ENCODE measurements at regions of chrX and their contacts with region 1.

Region 1: DNA sequence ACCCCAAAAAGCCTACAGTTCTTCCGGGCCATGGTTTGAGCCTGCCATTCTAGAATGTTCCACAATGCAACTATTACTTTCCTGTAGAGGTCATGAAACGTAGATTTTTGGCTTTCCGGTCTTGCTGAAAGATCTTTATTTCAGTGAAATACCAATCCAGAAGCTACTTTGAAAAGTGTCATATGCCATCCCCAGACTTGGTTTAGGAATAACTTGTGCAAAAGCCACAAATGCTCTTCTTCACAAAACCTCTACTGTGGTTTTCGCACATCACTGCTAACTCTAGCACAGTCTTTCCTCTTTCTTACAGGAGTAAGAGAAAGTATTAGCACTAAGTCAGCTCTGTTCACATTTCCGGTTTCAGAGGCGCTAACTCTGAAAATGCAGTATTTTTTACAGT is 12.7 kb upstream of the CD40LG start:
- DNase-seq: peak; percentile 51
- ATAC-seq: peak; percentile 80
- H3K4me3 ChIP-seq: no peak overlapping the region
- H3K27ac ChIP-seq: no peak overlapping the region
- H3K4me1 ChIP-seq: peaks cover 8% of the 10 kb centered on the region
- H3K27me3 ChIP-seq: no peaks in the 10 kb centered on the region
- CTCF ChIP-seq: no peak
- EP300 ChIP-seq: no peak
- POLR2A ChIP-seq: no peak
- RAD21 ChIP-seq: no peak

Region 2: DNA sequence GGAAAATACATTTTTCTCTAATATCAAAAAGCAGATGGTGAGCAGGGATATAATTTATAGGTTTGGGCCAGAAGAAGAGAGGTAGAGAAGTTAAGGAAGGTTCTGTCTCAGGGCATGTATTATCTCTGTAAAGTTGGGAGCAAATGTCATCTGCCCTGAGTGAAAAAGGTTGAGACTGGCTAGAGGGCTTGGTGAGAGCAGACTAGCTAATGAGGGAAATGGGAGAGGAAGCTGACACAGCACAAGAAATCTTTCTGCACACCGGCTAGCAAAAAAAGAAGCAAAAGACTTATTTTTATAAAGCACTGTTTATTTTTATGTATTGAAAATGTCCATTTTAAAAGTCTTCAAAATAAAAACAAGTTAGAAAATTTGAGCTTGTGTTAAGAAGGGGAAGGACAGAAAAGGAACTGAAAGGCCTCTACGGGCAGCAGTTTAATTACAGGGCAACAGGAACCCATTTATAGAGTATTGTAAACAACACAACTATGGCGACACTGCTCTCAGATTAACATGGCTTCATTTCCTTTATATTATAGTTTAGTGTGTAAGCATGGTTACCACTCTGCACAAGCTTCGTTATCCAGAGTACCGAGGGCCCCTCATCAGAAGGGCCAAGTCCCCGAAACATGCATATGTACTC is 30.1 kb after region 1 on chrX:
- CTCF ChIA-PET with region 1: interaction called, 5 read pairs
- POLR2A ChIA-PET with region 1: no interaction called
- RAD21 ChIA-PET with region 1: interaction called, 5 read pairs
- SMC1A ChIA-PET with region 1: interaction called, 10 read pairs
- in situ Hi-C with region 1: no loop called
- intact Hi-C with region 1: no loop called
- DNase-seq: no peak
- ATAC-seq: peak; percentile 88
- H3K4me3 ChIP-seq: no peak overlapping the region
- H3K27ac ChIP-seq: peak overlapping the region; percentile 67
- H3K4me1 ChIP-seq: peaks cover 8% of the 10 kb centered on the region; the same call in 1 of the 2 replicates
- H3K27me3 ChIP-seq: no peaks in the 10 kb centered on the region
- CTCF ChIP-seq: no peak
- EP300 ChIP-seq: no peak
- POLR2A ChIP-seq: no peak
- RAD21 ChIP-seq: no peak

Region 3: GRCh38 chrX:137067147-137067546 is 431.9 kb after region 1 on chrX:
- CTCF ChIA-PET with region 1: no interaction called
- POLR2A ChIA-PET with region 1: no interaction called
- RAD21 ChIA-PET with region 1: no interaction called
- SMC1A ChIA-PET with region 1: no interaction called
- in situ Hi-C with region 1: no loop called
- intact Hi-C with region 1: no loop called
- DNase-seq: no peak
- ATAC-seq: no peak
- H3K4me3 ChIP-seq: no peak overlapping the region
- H3K27ac ChIP-seq: no peak overlapping the region
- H3K4me1 ChIP-seq: no peaks in the 10 kb centered on the region
- H3K27me3 ChIP-seq: no peaks in the 10 kb centered on the region
- CTCF ChIP-seq: no peak
- EP300 ChIP-seq: no peak
- POLR2A ChIP-seq: no peak
- RAD21 ChIP-seq: no peak

Region 4: DNA sequence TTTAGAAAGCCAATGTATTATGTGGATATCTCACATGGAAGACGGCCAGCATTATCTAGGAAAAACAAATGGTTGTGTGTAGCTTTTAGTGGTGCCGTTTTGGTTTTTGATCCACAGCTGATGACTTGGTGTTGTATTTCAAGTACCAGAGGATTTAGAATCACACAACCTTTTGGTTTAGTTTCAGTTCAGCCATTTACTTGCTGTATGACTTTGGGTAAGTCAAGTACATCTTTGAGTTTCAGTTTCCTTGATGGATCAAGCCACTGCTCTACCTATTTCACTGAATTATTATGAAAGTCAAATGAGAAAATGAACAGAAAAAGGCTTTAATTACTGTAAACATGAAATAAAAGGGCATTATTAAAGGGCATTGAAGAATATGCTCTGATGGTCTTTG is 1136.3 kb after region 1 on chrX:
- CTCF ChIA-PET with region 1: no interaction called
- POLR2A ChIA-PET with region 1: no interaction called
- RAD21 ChIA-PET with region 1: no interaction called
- SMC1A ChIA-PET with region 1: no interaction called
- in situ Hi-C with region 1: no loop called
- intact Hi-C with region 1: no loop called
- DNase-seq: no peak
- ATAC-seq: no peak
- H3K4me3 ChIP-seq: no peak overlapping the region
- H3K27ac ChIP-seq: no peak overlapping the region
- H3K4me1 ChIP-seq: no peaks in the 10 kb centered on the region
- H3K27me3 ChIP-seq: no peaks in the 10 kb centered on the region
- CTCF ChIP-seq: no peak
- EP300 ChIP-seq: no peak
- POLR2A ChIP-seq: no peak
- RAD21 ChIP-seq: no peak

Measured in GM12878 (cell line).